ENCODE measurements at regions of chr5 and their contacts with region 1.

Region 1: GRCh38 chr5:14664302-14665100 is at the start of gene OTULIN:
- DNase-seq: peak; percentile 94
- H3K4me3 Mint-ChIP-seq: peak within 1 kb of the TSS; percentile 96
- H3K27ac Mint-ChIP-seq: peak within 1 kb of the TSS; percentile 97
- H3K4me1 Mint-ChIP-seq: peaks cover 70% of the 10 kb centered on the region
- H3K27me3 Mint-ChIP-seq: no peaks in the 10 kb centered on the region
- total RNA-seq, gene OTULIN: 46.4 to 48.0 TPM

Region 2: GRCh38 chr5:14142827-14143548 is 521.5 kb before region 1 on chr5 and contains the start of gene TRIO:
- CTCF ChIA-PET with region 1: no interaction called
- intact Hi-C with region 1: loop called (anchors 1 kb)
- DNase-seq: peak; percentile 79
- H3K4me3 Mint-ChIP-seq: peak within 1 kb of the TSS; percentile 78
- H3K27ac Mint-ChIP-seq: no peak within 1 kb of the TSS
- H3K4me1 Mint-ChIP-seq: peaks cover 11% of the 10 kb centered on the region
- H3K27me3 Mint-ChIP-seq: peaks cover 54% of the 10 kb centered on the region
- total RNA-seq, gene TRIO: 3.6 to 4.6 TPM

Region 3: GRCh38 chr5:14581333-14581890 is 83.1 kb before region 1 on chr5 and contains the start of gene OTULINL:
- CTCF ChIA-PET with region 1: no interaction called
- intact Hi-C with region 1: loop called (anchors 2 kb)
- DNase-seq: peak; percentile 91
- H3K4me3 Mint-ChIP-seq: peak within 1 kb of the TSS; percentile 75
- H3K27ac Mint-ChIP-seq: peak within 1 kb of the TSS; percentile 70
- H3K4me1 Mint-ChIP-seq: peaks cover 26% of the 10 kb centered on the region
- H3K27me3 Mint-ChIP-seq: peaks cover 2% of the 10 kb centered on the region
- total RNA-seq, gene OTULINL: 9.1 to 10.6 TPM

Region 4: DNA sequence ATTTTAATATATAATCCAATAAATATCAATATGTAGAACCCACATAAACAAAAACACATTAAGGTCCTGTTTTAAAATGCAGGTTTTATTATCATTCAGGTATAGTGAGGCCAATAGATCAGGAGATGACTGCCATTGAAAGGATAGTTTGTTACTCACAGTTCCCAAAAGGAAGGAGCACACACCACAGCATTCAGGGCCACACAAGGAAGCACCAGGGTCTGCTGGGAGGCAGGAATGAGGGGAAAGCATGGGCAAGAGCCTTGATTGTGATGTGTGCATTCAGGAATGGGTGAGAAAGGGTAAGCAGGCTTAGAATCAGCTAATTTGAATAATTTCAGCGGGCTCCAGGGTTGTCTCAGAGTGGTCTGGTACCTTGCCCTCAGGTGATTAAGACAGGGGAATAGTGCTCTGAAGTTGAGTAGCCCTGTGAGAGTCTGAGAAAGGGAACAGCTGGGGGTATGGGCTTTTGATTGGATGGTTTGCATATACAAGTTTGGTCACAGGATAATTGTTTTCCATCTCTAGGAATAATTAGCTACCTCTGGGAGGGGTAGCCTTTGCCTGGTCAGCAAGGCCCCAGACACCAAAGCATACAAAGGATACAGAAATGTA is 19.8 kb before region 1 on chr5:
- CTCF ChIA-PET with region 1: interaction called, 10 read pairs
- intact Hi-C with region 1: no loop called
- DNase-seq: no peak
- H3K4me3 Mint-ChIP-seq: no peak overlapping the region
- H3K27ac Mint-ChIP-seq: no peak overlapping the region
- H3K4me1 Mint-ChIP-seq: peaks cover 2% of the 10 kb centered on the region
- H3K27me3 Mint-ChIP-seq: peaks cover 9% of the 10 kb centered on the region

Region 5: DNA sequence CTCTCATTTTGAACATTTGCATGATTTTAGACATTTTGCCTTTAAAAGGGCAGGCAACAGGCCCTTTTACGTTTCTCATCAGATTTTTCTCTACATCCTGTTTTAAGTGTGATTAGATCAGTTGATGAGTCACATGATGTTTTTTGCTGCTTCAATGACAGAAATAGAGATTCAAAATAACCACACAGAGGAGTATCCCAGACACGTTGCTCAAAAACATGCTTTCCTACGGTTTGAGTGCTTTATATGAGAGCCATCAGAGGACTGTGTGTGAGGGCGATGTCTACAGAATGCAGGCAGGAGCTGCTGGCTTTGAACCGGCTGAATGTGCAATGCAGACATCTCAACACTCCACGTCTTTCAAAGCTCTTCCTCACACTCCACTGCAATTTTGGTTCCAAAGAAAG is 42.1 kb after region 1 on chr5:
- CTCF ChIA-PET with region 1: interaction called, 3 read pairs
- intact Hi-C with region 1: loop called (anchors 1 kb)
- DNase-seq: peak; percentile 46
- H3K4me3 Mint-ChIP-seq: peak overlapping the region; percentile 18
- H3K27ac Mint-ChIP-seq: peak overlapping the region; percentile 94
- H3K4me1 Mint-ChIP-seq: peaks cover 75% of the 10 kb centered on the region
- H3K27me3 Mint-ChIP-seq: no peaks in the 10 kb centered on the region

Region 6: DNA sequence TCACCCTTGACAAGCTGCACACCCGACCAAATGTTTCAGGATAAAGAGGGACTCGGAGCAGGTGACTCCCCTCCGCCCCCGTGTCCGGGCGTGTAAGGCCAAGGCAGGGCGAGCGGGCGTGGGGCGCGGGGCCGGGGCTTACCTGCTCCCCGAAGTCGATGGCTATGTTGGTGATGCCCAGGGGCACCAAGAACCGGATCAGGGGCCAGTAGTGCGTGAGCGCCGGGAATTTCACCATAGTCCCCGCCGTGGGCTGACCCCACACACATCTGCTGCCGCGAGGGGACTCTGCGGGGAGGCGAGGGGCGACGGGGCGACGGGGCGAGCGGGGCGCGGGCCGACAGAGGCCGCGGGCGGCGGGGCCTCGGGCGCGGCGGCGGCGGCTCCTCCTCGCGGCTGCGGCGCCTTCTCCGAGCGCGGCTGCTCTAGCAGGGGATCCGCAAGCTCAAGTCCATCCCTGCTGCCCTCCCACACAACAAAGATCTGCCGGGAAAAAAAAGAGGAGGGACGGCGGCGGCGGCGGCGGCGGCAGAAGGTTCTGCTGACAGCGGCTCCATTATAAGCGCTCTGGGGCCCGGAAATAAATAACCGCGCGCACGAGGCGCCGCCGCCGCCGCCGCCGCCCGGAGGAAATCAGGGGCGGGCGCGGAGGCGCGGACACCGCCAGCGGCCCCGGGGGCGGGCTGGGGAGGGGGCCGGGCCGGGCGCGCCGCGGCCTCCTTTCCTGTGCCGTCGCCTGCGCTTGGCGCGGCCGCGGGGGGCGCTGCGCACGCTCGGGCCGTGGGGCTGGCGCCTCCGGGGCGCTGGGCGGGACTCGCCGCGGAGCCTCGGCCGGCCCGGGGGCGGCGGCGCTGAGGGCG is 206.9 kb after region 1 on chr5 and contains the start of gene ANKH:
- CTCF ChIA-PET with region 1: no interaction called
- intact Hi-C with region 1: loop called (anchors 1 kb)
- DNase-seq: peak; percentile 79
- H3K4me3 Mint-ChIP-seq: peak within 1 kb of the TSS; percentile 96
- H3K27ac Mint-ChIP-seq: peak within 1 kb of the TSS; percentile 95
- H3K4me1 Mint-ChIP-seq: peaks cover 33% of the 10 kb centered on the region
- H3K27me3 Mint-ChIP-seq: no peaks in the 10 kb centered on the region
- total RNA-seq, gene ANKH: 92.0 to 93.5 TPM

Region 7: DNA sequence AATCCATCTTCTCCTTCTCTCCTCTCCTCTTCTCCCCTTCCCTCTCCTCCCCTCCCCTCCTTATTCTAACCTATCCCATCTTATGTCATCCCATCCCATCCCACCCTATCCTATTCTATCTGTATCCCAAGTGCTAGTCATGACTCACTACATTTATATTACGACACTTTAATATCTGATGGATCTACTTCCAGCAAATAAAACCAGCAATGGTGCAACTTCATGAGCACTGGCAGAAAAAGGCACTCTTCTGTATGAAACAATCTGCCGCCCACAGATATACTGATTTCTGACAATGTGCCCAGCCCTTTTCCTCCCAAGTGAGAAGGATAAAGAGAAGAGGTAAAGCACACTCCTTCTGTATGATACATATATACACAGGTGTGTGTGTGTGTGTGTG is 293.7 kb after region 1 on chr5:
- CTCF ChIA-PET with region 1: no interaction called
- intact Hi-C with region 1: no loop called
- DNase-seq: no peak
- H3K4me3 Mint-ChIP-seq: no peak overlapping the region
- H3K27ac Mint-ChIP-seq: no peak overlapping the region
- H3K4me1 Mint-ChIP-seq: no peaks in the 10 kb centered on the region
- H3K27me3 Mint-ChIP-seq: no peaks in the 10 kb centered on the region

Region 8: DNA sequence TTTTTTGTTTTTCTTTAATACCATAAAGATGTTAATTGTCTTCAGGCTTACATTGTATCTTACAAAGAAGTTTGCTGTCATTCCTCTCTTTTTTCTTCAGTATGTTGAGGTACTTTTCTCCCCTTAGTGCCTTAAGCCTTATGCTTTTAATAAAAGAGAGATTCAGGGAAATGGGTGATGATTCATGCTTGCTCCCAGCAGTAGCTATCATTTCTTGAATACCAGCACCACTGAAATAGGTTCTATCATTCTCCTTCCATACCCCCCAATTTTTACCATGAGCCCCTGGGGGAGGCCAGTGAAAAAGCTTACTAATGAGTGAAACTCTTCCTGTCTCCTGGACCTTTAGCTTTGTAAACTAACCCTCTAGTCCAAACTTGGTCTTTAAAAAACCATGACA is 1000.5 kb after region 1 on chr5:
- CTCF ChIA-PET with region 1: no interaction called
- intact Hi-C with region 1: no loop called
- DNase-seq: no peak
- H3K4me3 Mint-ChIP-seq: no peak overlapping the region
- H3K27ac Mint-ChIP-seq: no peak overlapping the region
- H3K4me1 Mint-ChIP-seq: no peaks in the 10 kb centered on the region
- H3K27me3 Mint-ChIP-seq: no peaks in the 10 kb centered on the region

Region 9: GRCh38 chr5:16465544-16466466 is 1801.3 kb after region 1 on chr5 and contains the start of gene ZNF622:
- CTCF ChIA-PET with region 1: no interaction called
- intact Hi-C with region 1: loop called (anchors 5 kb)
- DNase-seq: peak; percentile 92
- H3K4me3 Mint-ChIP-seq: peak within 1 kb of the TSS; percentile 96
- H3K27ac Mint-ChIP-seq: peak within 1 kb of the TSS; percentile 93
- H3K4me1 Mint-ChIP-seq: peaks cover 70% of the 10 kb centered on the region
- H3K27me3 Mint-ChIP-seq: no peaks in the 10 kb centered on the region
- total RNA-seq, gene ZNF622: 25.7 to 25.9 TPM

Measured in activated naive CD4-positive, alpha-beta T cell treated with anti-CD3 and anti-CD28 coated beads for 36 hours (primary cell).